IMR-90 (cell line): ENCODE measurements at regions of chr13 and their contacts with region 1.

Region 1: GRCh38 chr13:44969551-44970484 is 19.5 kb downstream of the NUFIP1 start:
- DNase-seq: peak; percentile 71
- ATAC-seq: peak; percentile 55
- H3K4me3 ChIP-seq: no peak overlapping the region
- H3K27ac ChIP-seq: no peak overlapping the region
- H3K4me1 ChIP-seq: peaks cover 9% of the 10 kb centered on the region
- H3K27me3 ChIP-seq: no peaks in the 10 kb centered on the region
- CTCF ChIP-seq: peak; percentile 87
- POLR2A ChIP-seq: no peak
- RAD21 ChIP-seq: peak; percentile 89

Region 2: GRCh38 chr13:44050450-44051063 is 919.3 kb before region 1 on chr13:
- CTCF ChIA-PET with region 1: no interaction called
- POLR2A ChIA-PET with region 1: no interaction called
- dilution Hi-C with region 1: no loop called
- in situ Hi-C with region 1: no loop called
- intact Hi-C with region 1: loop called (anchors 5 kb)
- DNase-seq: peak; percentile 52
- ATAC-seq: no peak; the same call in 1 of the 2 replicates
- H3K4me3 ChIP-seq: no peak overlapping the region
- H3K27ac ChIP-seq: no peak overlapping the region
- H3K4me1 ChIP-seq: peaks cover 13% of the 10 kb centered on the region
- H3K27me3 ChIP-seq: peaks cover 5% of the 10 kb centered on the region
- CTCF ChIP-seq: peak; percentile 75
- POLR2A ChIP-seq: no peak
- RAD21 ChIP-seq: peak; percentile 78

Region 3: GRCh38 chr13:44484562-44485138 is 485.2 kb before region 1 on chr13:
- CTCF ChIA-PET with region 1: no interaction called
- POLR2A ChIA-PET with region 1: no interaction called
- dilution Hi-C with region 1: no loop called
- in situ Hi-C with region 1: no loop called
- intact Hi-C with region 1: loop called (anchors 1 kb)
- DNase-seq: no peak
- ATAC-seq: no peak; the same call in 1 of the 2 replicates
- H3K4me3 ChIP-seq: no peak overlapping the region
- H3K27ac ChIP-seq: no peak overlapping the region
- H3K4me1 ChIP-seq: peaks cover 2% of the 10 kb centered on the region; the same call in 1 of the 2 replicates
- H3K27me3 ChIP-seq: no peaks in the 10 kb centered on the region
- CTCF ChIP-seq: no peak
- POLR2A ChIP-seq: no peak
- RAD21 ChIP-seq: no peak

Region 4: DNA sequence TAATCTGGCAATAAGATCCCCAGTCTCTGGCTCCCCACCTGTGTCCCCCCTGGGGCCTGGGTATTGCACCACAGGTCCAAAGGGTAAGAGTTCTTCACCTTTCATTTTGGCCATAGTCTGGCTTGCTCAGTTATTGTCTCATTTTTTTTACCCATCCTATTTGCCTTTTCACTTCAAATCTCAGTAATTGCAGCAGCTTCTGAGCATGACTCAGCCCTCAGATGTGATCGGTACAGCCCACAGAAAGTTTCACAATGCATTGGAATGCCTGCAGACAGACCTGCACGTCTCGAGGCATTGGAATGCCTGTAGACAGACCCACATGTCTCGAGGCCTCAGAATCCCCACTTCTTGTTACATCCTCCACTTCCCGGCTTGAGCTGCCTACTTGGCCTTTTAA is 154.2 kb before region 1 on chr13:
- CTCF ChIA-PET with region 1: no interaction called
- POLR2A ChIA-PET with region 1: no interaction called
- dilution Hi-C with region 1: no loop called
- in situ Hi-C with region 1: no loop called
- intact Hi-C with region 1: loop called (anchors 5 kb)
- DNase-seq: peak; percentile 98
- ATAC-seq: peak; percentile 87
- H3K4me3 ChIP-seq: no peak overlapping the region
- H3K27ac ChIP-seq: peak overlapping the region; percentile 63
- H3K4me1 ChIP-seq: peaks cover 27% of the 10 kb centered on the region
- H3K27me3 ChIP-seq: no peaks in the 10 kb centered on the region
- CTCF ChIP-seq: no peak
- POLR2A ChIP-seq: no peak
- RAD21 ChIP-seq: peak; percentile 8; the same call in 1 of the 2 replicates

Region 5: GRCh38 chr13:45119991-45120864 is 150.4 kb after region 1 on chr13 and contains the start of gene GTF2F2:
- CTCF ChIA-PET with region 1: no interaction called
- POLR2A ChIA-PET with region 1: no interaction called
- dilution Hi-C with region 1: no loop called
- in situ Hi-C with region 1: no loop called
- intact Hi-C with region 1: loop called (anchors 10 kb)
- DNase-seq: peak; percentile 90
- ATAC-seq: peak; percentile 89
- H3K4me3 ChIP-seq: peak within 1 kb of the TSS; percentile 70
- H3K27ac ChIP-seq: peak within 1 kb of the TSS; percentile 87
- H3K4me1 ChIP-seq: peaks cover 5% of the 10 kb centered on the region
- H3K27me3 ChIP-seq: no peaks in the 10 kb centered on the region
- CTCF ChIP-seq: no peak
- POLR2A ChIP-seq: peak; percentile 72
- RAD21 ChIP-seq: no peak
- total RNA-seq, gene GTF2F2: 16.5 and 35.6 TPM in 2 replicates

Region 6: DNA sequence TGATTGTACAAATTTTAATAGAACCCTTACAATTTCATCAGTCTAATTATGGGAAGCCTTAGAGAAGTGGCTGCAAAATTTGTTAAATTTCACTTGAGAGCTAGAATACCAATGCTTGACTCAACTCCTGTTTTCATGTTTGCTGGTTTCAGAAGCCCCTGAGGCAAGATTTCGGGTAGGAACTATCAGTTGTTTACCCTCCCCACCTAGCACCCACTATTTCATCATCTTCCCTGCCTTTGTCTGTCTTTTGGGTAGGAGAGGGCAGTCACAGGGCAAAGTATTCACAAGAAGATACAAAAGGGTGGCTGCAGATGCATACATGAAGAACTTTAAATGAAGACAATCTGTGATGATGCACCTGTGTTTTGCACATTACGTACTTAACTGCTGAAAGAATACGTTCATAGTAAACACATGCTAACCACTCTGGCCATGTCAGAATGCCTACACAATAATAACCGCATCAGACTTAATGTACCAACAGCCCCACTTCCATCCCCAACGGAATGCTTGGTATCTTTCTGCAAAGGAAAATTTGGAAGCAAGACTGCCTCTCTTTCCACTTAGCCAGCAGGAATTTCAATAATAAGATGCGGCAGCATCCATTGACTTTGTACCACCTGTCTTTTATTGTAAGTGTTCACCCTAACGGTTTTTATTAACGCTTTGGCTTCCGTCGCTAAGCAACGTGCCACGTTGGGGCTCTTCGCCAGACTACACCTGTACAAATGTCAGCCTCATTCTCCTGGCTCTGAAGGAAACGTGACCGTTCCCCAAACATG is 340.7 kb after region 1 on chr13:
- CTCF ChIA-PET with region 1: interaction called, 5 read pairs
- POLR2A ChIA-PET with region 1: no interaction called
- dilution Hi-C with region 1: no loop called
- in situ Hi-C with region 1: no loop called
- intact Hi-C with region 1: loop called (anchors 1 kb)
- DNase-seq: no peak
- ATAC-seq: no peak
- H3K4me3 ChIP-seq: no peak overlapping the region
- H3K27ac ChIP-seq: no peak overlapping the region
- H3K4me1 ChIP-seq: no peaks in the 10 kb centered on the region; the same call in 1 of the 2 replicates
- H3K27me3 ChIP-seq: no peaks in the 10 kb centered on the region
- CTCF ChIP-seq: no peak
- POLR2A ChIP-seq: no peak
- RAD21 ChIP-seq: no peak